Caco-2 (cell line): ENCODE measurements at regions of chr17 and their contacts with region 1.

Region 1: DNA sequence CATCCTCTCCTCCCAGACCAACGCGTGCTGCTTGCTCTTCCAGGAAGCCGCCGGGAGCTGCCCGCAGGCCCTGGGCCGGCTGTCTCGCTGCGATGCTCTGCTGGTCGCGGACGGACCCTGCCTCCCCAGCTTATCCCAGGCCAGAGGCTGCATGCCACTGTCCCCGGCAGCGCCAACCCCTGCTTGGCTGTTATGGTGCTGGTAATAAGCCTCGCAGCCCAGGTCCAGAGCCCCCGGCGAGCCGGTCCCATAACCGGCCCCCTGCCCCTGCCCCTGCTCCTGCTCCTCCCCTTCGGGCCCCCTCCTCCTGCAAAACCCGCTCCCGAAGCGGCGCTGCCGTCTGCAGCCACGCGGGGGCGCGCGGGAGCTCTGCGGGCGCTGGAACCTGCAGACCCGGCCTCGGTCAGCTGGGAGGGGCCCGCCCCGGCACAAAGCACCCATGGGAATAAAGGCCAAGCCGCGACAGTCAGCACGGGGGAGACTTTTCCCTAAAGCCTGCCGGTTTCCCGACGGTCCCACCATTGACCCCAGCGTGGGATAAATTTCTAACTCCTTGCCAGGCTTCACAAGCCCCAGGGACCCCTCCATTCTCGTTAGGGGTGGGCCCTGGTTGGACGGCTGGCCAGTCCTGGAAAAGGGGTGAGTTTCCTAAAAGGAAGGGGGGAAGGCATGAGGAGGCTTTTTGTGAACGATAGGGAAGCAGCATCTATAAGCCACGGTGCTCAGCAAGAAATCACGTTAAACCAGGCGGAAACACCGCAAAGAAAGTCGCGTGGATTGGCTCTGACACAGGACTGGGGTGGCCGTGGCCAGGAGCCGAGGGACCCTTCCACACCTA is 11.2 kb downstream of the ENPP7 start:
- DNase-seq: peak; percentile 91 to 98
- H3K4me3 ChIP-seq: peak overlapping the region; percentile 56
- H3K4me3 Mint-ChIP-seq: peak overlapping the region; percentile 75
- H3K27ac Mint-ChIP-seq: peak overlapping the region; percentile 45
- H3K4me1 ChIP-seq: peaks cover 60% of the 10 kb centered on the region
- H3K4me1 Mint-ChIP-seq: peaks cover 21% of the 10 kb centered on the region
- H3K27me3 ChIP-seq: no peaks in the 10 kb centered on the region
- H3K27me3 Mint-ChIP-seq: no peaks in the 10 kb centered on the region
- CTCF ChIP-seq: peak; percentile 95 to 98

Region 2: DNA sequence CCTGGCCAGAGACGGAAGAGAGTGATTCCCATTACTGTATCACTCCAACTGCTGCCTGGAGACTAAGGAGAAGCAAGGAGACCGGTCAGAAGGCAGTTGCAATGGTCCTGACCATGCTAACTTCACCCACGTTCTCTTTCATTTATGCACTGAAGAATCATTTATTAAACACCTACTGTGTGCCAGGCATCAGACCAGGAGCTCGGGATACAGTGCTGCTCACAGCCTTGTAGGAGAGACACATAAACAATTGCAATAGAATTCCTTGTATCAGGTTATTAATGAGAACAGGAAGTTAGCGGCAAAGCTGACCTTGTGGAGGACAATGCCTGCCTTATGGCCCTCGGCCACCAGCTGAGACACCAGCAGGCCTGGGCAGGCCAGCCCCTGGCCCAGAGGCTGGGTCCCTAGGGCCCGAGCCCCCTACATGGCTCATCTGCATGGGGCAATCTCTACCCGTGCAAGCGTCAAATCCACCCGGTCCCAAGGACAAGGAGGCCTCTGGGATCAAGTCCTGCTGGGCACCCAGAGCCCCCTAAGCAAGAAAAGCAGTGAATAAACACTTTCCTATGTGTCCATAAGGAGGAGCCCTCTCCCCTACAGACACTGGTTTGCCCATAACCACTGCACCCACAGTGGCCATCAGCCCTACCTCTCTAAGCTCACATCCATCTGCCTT is 19.8 kb before region 1 on chr17:
- CTCF ChIA-PET with region 1: interaction called, 30 read pairs
- POLR2A ChIA-PET with region 1: interaction called, 3 read pairs
- intact Hi-C with region 1: no loop called
- DNase-seq: peak; percentile 60 to 66
- H3K4me3 ChIP-seq: no peak overlapping the region
- H3K4me3 Mint-ChIP-seq: no peak overlapping the region
- H3K27ac Mint-ChIP-seq: no peak overlapping the region
- H3K4me1 ChIP-seq: no peaks in the 10 kb centered on the region
- H3K4me1 Mint-ChIP-seq: peaks cover 6% of the 10 kb centered on the region
- H3K27me3 ChIP-seq: no peaks in the 10 kb centered on the region
- H3K27me3 Mint-ChIP-seq: no peaks in the 10 kb centered on the region
- CTCF ChIP-seq: peak; percentile 60 to 73

Region 3: GRCh38 chr17:79728226-79728907 is 13.6 kb before region 1 on chr17:
- CTCF ChIA-PET with region 1: interaction called, 12 read pairs
- POLR2A ChIA-PET with region 1: interaction called, 5 read pairs
- intact Hi-C with region 1: loop called (anchors 1 kb)
- DNase-seq: peak; percentile 89 to 90
- H3K4me3 ChIP-seq: no peak overlapping the region
- H3K4me3 Mint-ChIP-seq: peak overlapping the region; percentile 20
- H3K27ac Mint-ChIP-seq: peak overlapping the region; percentile 58
- H3K4me1 ChIP-seq: peaks cover 4% of the 10 kb centered on the region; the same call in 1 of the 2 replicates
- H3K4me1 Mint-ChIP-seq: peaks cover 16% of the 10 kb centered on the region
- H3K27me3 ChIP-seq: no peaks in the 10 kb centered on the region
- H3K27me3 Mint-ChIP-seq: no peaks in the 10 kb centered on the region
- CTCF ChIP-seq: no peak

Region 4: GRCh38 chr17:79777894-79778503 is 36.0 kb after region 1 on chr17 and contains the start of gene CBX2:
- CTCF ChIA-PET with region 1: interaction called, 25 read pairs
- POLR2A ChIA-PET with region 1: interaction called, 9 read pairs
- intact Hi-C with region 1: loop called (anchors 1 kb)
- DNase-seq: peak; percentile 76 to 92
- H3K4me3 ChIP-seq: peak within 1 kb of the TSS; percentile 88
- H3K4me3 Mint-ChIP-seq: peak within 1 kb of the TSS; percentile 99
- H3K27ac Mint-ChIP-seq: peak within 1 kb of the TSS; percentile 75
- H3K4me1 ChIP-seq: peaks cover 19% of the 10 kb centered on the region
- H3K4me1 Mint-ChIP-seq: peaks cover 22% of the 10 kb centered on the region
- H3K27me3 ChIP-seq: no peaks in the 10 kb centered on the region
- H3K27me3 Mint-ChIP-seq: no peaks in the 10 kb centered on the region
- CTCF ChIP-seq: no peak
- total RNA-seq, gene CBX2: 50.0 and 52.8 TPM in 2 replicates

Region 5: GRCh38 chr17:79915850-79916430 is 174.0 kb after region 1 on chr17:
- CTCF ChIA-PET with region 1: interaction called, 6 read pairs
- POLR2A ChIA-PET with region 1: no interaction called
- intact Hi-C with region 1: loop called (anchors 1 kb)
- DNase-seq: peak; percentile 99
- H3K4me3 ChIP-seq: no peak overlapping the region
- H3K4me3 Mint-ChIP-seq: peak overlapping the region; percentile 52
- H3K27ac Mint-ChIP-seq: peak overlapping the region; percentile 98
- H3K4me1 ChIP-seq: peaks cover 61% of the 10 kb centered on the region
- H3K4me1 Mint-ChIP-seq: peaks cover 22% of the 10 kb centered on the region
- H3K27me3 ChIP-seq: no peaks in the 10 kb centered on the region
- H3K27me3 Mint-ChIP-seq: no peaks in the 10 kb centered on the region
- CTCF ChIP-seq: peak; percentile 36 to 66